ENCODE measurements at regions of chr16 and their contacts with region 1.

Region 1: GRCh38 chr16:80526425-80527061 is 14.2 kb upstream of the DYNLRB2 start:
- DNase-seq: peak; percentile 35
- H3K4me3 Mint-ChIP-seq: no peak overlapping the region
- H3K27ac Mint-ChIP-seq: no peak overlapping the region
- H3K4me1 Mint-ChIP-seq: peaks cover 8% of the 10 kb centered on the region
- H3K27me3 Mint-ChIP-seq: peaks cover 26% of the 10 kb centered on the region

Region 2: DNA sequence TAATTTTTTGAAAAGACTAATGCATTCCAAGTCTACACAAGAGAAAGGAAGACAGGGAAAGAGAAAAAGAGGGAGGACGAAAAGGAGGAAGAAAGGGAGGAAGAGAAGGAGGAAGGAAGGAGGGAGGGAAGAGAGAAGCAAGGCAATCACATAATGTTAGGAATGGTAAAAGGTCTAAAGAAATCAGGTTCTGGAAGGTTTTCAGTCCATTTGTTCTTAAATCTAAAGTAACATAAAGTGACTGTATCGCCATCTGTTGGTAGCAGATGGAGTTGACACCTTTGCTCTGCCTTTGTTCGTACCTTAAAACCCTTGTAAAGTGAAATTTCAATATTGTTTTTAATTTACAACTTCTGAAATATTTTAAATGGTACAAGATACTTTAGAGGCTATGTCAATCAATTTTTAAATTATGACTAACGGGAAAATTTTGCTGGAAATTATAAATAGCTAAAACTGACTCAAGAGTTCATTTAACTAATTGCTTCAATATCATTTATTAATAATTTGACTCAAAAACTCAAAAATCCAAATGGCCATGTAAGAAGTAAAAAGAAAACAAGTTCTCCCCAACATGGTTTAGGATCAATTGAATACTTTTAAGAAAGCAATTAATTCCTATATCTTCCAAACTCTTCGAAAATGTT is 298.3 kb after region 1 on chr16:
- intact Hi-C with region 1: loop called (anchors 1 kb)
- DNase-seq: no peak
- H3K4me3 Mint-ChIP-seq: no peak overlapping the region
- H3K27ac Mint-ChIP-seq: no peak overlapping the region
- H3K4me1 Mint-ChIP-seq: peaks cover 3% of the 10 kb centered on the region
- H3K27me3 Mint-ChIP-seq: peaks cover 22% of the 10 kb centered on the region